T-cell (primary cell): ENCODE measurements at regions of chr17 and their contacts with region 1.

Region 1: GRCh38 chr17:13581925-13582324 is 19.8 kb downstream of the HS3ST3A1 start:
- DNase-seq: no peak
- ATAC-seq: no peak
- H3K4me3 ChIP-seq: no peak overlapping the region
- H3K4me3 Mint-ChIP-seq: no peak overlapping the region
- H3K27ac ChIP-seq: no peak overlapping the region
- H3K27ac Mint-ChIP-seq: no peak overlapping the region
- H3K4me1 ChIP-seq: no peaks in the 10 kb centered on the region
- H3K4me1 Mint-ChIP-seq: peaks cover 0 to 2% (median 0%) of the 10 kb centered on the region in 3 donors
- H3K27me3 ChIP-seq: no peaks in the 10 kb centered on the region
- H3K27me3 Mint-ChIP-seq: peaks cover 14 to 15% of the 10 kb centered on the region in 2 donors

Region 2: GRCh38 chr17:13541032-13541480 is 40.9 kb before region 1 on chr17:
- CTCF ChIA-PET with region 1: no interaction called
- POLR2A ChIA-PET with region 1: no interaction called
- DNase-seq: no peak
- ATAC-seq: no peak
- H3K4me3 ChIP-seq: no peak overlapping the region
- H3K4me3 Mint-ChIP-seq: no peak overlapping the region
- H3K27ac ChIP-seq: no peak overlapping the region
- H3K27ac Mint-ChIP-seq: no peak overlapping the region
- H3K4me1 ChIP-seq: no peaks in the 10 kb centered on the region
- H3K4me1 Mint-ChIP-seq: no peaks in the 10 kb centered on the region
- H3K27me3 ChIP-seq: peaks cover 0 to 4% of the 10 kb centered on the region in 2 experiments
- H3K27me3 Mint-ChIP-seq: peaks cover 0 to 3% of the 10 kb centered on the region in 2 donors

Region 3: GRCh38 chr17:13568582-13569397 is 13.1 kb before region 1 on chr17:
- CTCF ChIA-PET with region 1: no interaction called
- POLR2A ChIA-PET with region 1: interaction called in 1 of 2 experiments, 11 read pairs
- DNase-seq: no peak
- ATAC-seq: no peak
- H3K4me3 ChIP-seq: no peak overlapping the region
- H3K4me3 Mint-ChIP-seq: no peak overlapping the region
- H3K27ac ChIP-seq: no peak overlapping the region
- H3K27ac Mint-ChIP-seq: no peak overlapping the region
- H3K4me1 ChIP-seq: no peaks in the 10 kb centered on the region
- H3K4me1 Mint-ChIP-seq: peaks cover 0 to 8% (median 7%) of the 10 kb centered on the region in 3 donors
- H3K27me3 ChIP-seq: peaks cover 0 to 5% of the 10 kb centered on the region in 2 experiments
- H3K27me3 Mint-ChIP-seq: peaks cover 20 to 27% of the 10 kb centered on the region in 2 donors

Region 4: DNA sequence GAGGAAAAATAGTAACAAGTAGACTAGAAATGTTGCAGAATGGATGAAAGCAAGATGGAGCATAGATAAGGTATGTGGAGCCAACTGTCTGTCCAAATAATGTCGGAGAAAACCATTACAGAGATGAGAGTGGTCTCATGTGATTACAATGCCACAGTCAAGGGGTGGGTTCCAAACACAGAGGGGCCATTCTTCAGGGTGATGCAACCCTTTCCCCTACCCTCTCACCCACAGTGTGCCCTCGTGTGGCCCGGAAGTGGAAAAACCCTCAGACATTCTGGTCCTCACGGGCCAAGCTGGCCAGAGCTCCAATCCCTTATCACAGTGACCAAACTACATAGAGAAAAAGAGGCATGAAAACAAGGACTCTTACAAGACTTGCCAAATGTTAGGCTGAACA is 37.5 kb after region 1 on chr17:
- CTCF ChIA-PET with region 1: no interaction called
- POLR2A ChIA-PET with region 1: no interaction called
- DNase-seq: no peak
- ATAC-seq: no peak
- H3K4me3 ChIP-seq: no peak overlapping the region
- H3K4me3 Mint-ChIP-seq: no peak overlapping the region
- H3K27ac ChIP-seq: no peak overlapping the region
- H3K27ac Mint-ChIP-seq: no peak overlapping the region
- H3K4me1 ChIP-seq: no peaks in the 10 kb centered on the region
- H3K4me1 Mint-ChIP-seq: no peaks in the 10 kb centered on the region
- H3K27me3 ChIP-seq: peaks cover 2 to 6% of the 10 kb centered on the region in 2 experiments
- H3K27me3 Mint-ChIP-seq: peaks cover 17 to 25% of the 10 kb centered on the region in 2 donors